Heart right ventricle (tissue), 16 donors: ENCODE measurements at regions of chr17 and their contacts with region 1.

Region 1: GRCh38 chr17:82030470-82031302 is 792 bp upstream of the RAC3 start:
- DNase-seq: peak; percentile 82 to 87
- ATAC-seq: peak; percentile 74 to 92 (median 84)
- H3K4me3 ChIP-seq: peak overlapping the region; percentile 37 to 59 (median 52)
- H3K27ac ChIP-seq: peak overlapping the region in 2 of 10 donors; percentile 8 to 26
- H3K4me1 ChIP-seq: peaks cover 7 to 35% (median 25%) of the 10 kb centered on the region in 9 donors
- H3K27me3 ChIP-seq: peaks cover 0 to 10% (median 6%) of the 10 kb centered on the region in 7 donors
- CTCF ChIP-seq: peak; percentile 83 to 98 (median 95)

Region 2: DNA sequence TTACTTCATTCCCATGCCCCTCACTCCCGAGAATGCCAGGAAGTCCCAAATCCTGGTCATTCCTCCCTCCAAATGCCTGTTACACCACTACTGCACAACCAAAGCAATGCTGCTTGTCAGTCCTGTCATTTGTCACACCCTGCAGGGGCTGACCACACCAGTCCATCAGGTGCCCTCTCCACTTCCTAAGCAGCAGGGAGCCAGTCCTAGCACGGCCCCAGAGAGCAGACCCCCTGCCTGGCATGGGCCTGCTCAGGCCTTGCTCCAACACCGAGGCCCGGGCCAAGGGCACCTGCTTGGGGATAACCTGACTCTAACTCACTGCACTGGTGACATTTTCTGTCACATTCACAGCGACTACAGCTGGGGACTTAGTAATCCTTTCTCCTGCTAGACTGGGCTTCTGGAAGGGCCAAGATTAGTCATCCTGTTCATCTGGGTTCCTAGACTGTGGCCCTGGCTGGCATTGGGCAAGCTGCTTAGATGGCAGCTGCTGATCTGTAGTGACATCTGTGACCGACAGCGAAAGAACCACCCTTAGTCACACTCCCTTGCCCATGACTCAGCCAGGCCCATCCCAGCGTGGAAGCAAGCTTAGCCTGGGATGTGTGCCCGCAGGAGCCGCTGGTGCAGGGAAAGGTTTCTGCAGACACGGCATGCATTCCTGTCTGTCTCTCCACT is 144.7 kb before region 1 on chr17:
- intact Hi-C with region 1: no loop called
- DNase-seq: no peak
- ATAC-seq: no peak
- H3K4me3 ChIP-seq: no peak overlapping the region
- H3K27ac ChIP-seq: no peak overlapping the region
- H3K4me1 ChIP-seq: peaks cover 9 to 41% (median 15%) of the 10 kb centered on the region in 9 donors
- H3K27me3 ChIP-seq: no peaks in the 10 kb centered on the region
- CTCF ChIP-seq: no peak

Region 3: DNA sequence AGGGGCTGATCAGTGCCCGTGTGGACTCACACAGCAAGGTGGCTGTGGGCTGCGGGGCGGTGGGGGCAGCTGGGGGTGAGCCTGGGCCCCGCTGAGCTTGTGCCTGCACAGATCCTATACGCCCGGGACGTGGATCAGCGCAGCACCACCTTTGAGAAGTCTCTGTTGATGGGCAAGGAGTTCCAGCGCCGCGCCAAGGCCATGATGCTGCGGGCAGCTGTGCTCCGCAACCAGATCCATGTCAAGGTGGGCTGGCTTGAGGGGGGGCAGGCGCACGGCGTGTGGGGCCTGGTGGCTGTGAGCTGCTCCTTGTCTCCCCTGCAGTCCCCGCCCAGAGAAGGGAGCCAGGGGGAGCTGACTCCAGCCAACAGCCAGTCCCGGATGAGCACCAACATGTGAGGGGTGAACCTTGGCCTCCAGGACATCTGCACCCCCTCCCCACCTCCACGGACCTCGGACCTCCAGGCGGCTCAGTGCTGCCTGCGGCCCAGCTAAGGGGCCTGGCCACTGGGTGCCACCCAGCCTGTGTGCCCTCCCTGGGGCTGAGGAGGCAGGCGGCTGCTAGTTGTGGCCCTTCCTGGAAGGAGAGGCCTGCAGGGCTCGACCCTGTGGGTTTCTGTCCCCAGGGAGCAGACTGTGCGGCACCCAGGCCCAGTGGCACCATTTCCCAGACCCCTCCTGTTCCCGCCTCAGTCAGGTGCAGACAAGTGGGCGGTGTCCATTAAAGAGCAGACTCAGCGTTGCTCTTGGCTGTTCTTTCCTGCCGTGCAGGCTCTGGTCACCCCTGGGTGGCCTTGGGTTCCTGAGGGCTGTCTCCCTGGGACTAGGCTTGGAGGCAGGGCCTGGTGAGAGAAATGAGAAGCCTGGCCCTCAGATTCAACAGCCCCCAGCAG is 26.3 kb after region 1 on chr17:
- intact Hi-C with region 1: no loop called
- DNase-seq: no peak
- ATAC-seq: no peak
- H3K4me3 ChIP-seq: no peak overlapping the region
- H3K27ac ChIP-seq: no peak overlapping the region
- H3K4me1 ChIP-seq: peaks cover 8 to 19% (median 16%) of the 10 kb centered on the region in 9 donors
- H3K27me3 ChIP-seq: no peaks in the 10 kb centered on the region
- CTCF ChIP-seq: no peak

Region 4: GRCh38 chr17:82105882-82106687 is 75.4 kb after region 1 on chr17:
- intact Hi-C with region 1: loop called in 1 of 10 experiments (anchors 5 kb)
- DNase-seq: peak; percentile 35 to 50
- ATAC-seq: peak in 7 of 8 donors; percentile 7 to 53 (median 39)
- H3K4me3 ChIP-seq: peak overlapping the region in 8 of 10 donors; percentile 0 to 45 (median 22)
- H3K27ac ChIP-seq: peak overlapping the region in 9 of 10 donors; percentile 3 to 91 (median 51)
- H3K4me1 ChIP-seq: peaks cover 8 to 40% (median 32%) of the 10 kb centered on the region in 9 donors
- H3K27me3 ChIP-seq: no peaks in the 10 kb centered on the region
- CTCF ChIP-seq: peak in 4 of 9 donors; percentile 17 to 28 (median 18)

Region 5: DNA sequence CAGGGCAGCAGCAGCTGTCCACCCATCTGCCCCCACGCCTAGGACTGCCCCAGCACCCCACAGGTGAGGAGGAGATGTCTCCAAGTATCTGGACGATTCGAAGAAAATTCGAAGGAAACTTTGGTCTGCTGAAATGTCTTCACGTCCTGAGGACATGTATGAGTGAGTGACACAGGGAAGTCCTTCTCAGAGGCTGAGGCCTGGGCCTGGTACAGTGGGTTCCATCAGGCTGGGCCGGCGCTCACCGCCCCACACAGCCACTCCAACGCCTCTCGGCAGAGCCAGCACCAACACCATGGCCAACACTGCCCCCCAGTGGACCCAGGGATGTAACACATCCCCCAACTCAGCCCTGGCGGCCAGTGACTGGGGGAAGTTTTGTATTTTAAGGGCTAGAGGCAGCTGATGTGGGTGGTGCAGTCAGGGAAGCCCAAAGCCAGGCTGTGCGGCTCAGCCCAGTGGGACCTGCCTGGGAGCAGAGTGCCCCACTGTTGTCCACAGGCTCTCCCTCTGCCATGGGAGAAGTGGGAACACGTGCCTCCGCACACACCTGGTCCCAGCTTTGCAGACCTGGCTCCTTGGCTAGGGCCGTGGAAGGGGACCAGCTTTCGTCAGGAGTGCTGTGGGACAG is 123.2 kb after region 1 on chr17:
- intact Hi-C with region 1: loop called (anchors 1 to 5 kb)
- DNase-seq: peak; percentile 70 to 79
- ATAC-seq: peak; percentile 83 to 94 (median 91)
- H3K4me3 ChIP-seq: no peak overlapping the region
- H3K27ac ChIP-seq: no peak overlapping the region
- H3K4me1 ChIP-seq: no peaks in the 10 kb centered on the region
- H3K27me3 ChIP-seq: no peaks in the 10 kb centered on the region
- CTCF ChIP-seq: peak; percentile 81 to 96 (median 88)